Activated CD4-positive, alpha-beta T cell treated with anti-CD3 and anti-CD28 coated beads, Interleukin-2, amount 10 ng/mL, durations not matched to agents 24 days and 14 days (primary cell): ENCODE measurements at regions of chr11 and their contacts with region 1.

Region 1: DNA sequence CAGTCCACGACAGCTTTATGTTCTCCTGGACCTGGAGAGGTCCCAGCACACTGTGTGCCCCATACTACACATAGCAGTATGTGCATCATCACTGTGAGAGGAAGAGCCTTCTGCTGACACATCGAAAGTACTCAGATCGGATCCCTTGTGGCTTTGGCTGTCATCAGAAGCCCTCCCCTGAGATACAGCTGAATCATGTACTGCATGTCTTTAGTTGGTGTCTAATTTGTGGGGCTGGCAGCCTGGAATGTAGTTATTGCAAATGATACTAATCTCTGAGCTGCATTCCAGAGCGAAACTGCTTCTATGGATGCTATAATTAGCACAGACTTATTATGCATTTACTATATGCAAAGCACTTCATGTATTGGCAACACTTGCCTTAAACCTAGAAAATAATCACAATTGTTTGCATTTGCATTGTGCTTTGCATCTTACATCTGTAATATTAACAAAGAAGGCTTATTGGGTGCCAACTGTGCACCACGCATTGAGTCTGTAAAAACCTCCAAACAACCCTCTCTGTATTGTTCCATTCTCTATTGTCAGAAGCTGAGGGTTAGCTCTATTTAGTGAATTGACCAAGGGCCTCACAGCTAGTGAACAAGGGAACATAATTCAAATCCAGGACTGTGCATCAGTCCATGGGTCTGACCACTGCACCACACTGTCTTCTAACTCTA is 89.2 kb upstream of the CRTAM start:
- DNase-seq: peak; percentile 87
- H3K4me3 Mint-ChIP-seq: no peak overlapping the region
- H3K27ac Mint-ChIP-seq: peak overlapping the region; percentile 17
- H3K4me1 Mint-ChIP-seq: peaks cover 20% of the 10 kb centered on the region
- H3K27me3 Mint-ChIP-seq: peaks cover 21% of the 10 kb centered on the region

Region 2: DNA sequence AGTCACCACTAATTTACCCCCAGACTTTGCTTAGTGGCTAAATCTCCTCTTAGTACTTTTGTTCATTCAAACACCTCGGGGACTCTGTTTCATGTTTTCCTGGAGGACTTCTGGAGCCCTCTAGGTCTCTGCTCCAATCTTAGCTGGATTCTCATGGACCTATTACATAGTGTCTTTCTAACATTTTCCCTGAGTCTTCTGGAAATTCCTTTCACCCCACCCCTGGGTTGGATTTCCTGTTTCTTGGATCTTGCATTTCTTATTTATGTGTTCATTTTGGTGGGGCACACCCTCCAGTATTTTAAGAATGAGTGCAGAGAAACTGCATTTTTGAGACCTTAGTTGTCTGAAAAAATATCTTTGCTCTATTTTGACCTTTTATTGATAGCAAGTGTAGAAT is 853.2 kb before region 1 on chr11:
- intact Hi-C with region 1: no loop called
- DNase-seq: no peak
- H3K4me3 Mint-ChIP-seq: no peak overlapping the region
- H3K27ac Mint-ChIP-seq: no peak overlapping the region
- H3K4me1 Mint-ChIP-seq: no peaks in the 10 kb centered on the region
- H3K27me3 Mint-ChIP-seq: no peaks in the 10 kb centered on the region

Region 3: DNA sequence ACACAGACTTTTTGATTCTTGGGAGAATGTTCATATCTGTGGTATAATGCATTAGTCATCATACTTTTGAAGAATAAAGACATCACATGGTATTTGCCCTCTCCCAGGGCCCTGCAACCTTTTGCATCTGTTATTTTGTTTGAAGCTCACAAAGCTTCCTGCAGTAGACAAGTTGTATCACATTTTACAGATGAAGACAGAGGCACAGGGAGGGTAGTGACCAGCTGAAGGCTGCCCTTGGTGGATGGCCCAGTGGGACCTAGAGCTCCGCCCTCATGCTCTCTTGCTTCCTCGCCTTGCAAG is 27.2 kb before region 1 on chr11:
- intact Hi-C with region 1: loop called (anchors 1 kb)
- DNase-seq: peak; percentile 61
- H3K4me3 Mint-ChIP-seq: no peak overlapping the region
- H3K27ac Mint-ChIP-seq: peak overlapping the region; percentile 45
- H3K4me1 Mint-ChIP-seq: peaks cover 51% of the 10 kb centered on the region
- H3K27me3 Mint-ChIP-seq: peaks cover 14% of the 10 kb centered on the region

Region 4: DNA sequence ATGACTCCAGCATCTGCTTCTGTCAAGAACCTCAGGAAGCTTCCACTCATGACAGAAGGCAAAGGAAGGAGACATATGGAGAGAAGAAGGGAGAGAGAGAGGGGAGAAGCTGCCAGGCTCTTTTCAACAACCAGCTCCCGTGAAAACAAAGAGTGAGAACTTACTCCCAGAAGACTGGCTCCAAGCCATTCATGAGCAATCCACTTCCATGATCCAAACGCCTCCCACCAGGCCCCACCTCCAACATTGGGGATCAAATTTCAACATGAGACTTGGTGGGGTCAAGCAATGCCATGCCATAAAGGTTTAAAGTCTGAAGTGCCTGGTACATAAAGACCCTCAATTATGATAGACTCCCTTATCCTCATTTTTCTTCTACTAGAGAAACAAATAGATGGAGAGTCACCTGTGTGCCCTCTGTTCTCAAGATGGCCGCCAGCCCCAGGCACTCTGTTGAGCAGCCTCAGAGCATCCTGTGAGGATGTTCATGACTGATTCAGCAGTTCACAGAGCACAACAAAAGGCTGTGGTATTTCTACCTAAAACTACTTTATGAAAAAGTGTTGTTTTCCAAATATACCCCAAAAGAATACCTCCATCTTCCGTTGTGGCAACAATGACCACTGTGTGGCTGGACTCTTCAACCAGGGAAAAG is 20.1 kb after region 1 on chr11:
- intact Hi-C with region 1: no loop called
- DNase-seq: no peak
- H3K4me3 Mint-ChIP-seq: no peak overlapping the region
- H3K27ac Mint-ChIP-seq: no peak overlapping the region
- H3K4me1 Mint-ChIP-seq: no peaks in the 10 kb centered on the region
- H3K27me3 Mint-ChIP-seq: peaks cover 11% of the 10 kb centered on the region